Motor neuron (in vitro differentiated cells): ENCODE measurements at regions of chr13 and their contacts with region 1.

Region 1: DNA sequence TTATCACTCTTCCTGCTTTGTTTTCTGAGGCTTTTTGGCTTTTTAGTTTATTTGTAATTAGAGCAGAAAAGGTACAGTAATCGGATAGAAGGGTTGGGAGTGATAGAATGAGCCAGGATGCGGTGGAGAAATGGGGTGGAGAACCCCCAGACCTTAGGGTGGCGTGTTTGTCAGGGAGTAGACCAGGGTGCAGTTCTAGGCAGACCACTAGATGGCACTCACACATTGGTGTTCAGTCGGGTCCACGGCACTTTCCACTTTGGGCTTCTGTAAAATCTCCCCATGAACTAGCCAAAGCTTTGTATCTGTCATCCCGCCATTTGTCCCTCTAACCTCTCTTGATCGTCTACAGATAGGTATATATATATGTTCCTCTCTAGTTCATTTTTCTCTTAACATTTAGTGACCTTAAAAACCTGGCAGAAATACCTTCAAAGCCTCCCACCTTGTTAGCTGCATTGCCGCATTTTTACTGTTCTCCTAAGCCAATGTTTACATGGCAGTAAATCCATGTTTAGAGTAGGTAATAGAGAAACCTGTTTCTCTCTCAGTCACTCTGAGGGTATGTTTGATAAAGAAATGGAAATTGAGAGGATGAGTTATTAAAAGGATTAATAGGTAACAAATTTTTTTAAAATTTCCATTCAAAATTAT is 154.9 kb downstream of the TM9SF2 start:
- ATAC-seq: peak; percentile 31 to 75 (median 60)
- H3K4me3 ChIP-seq: no peak overlapping the region
- H3K27ac ChIP-seq: no peak overlapping the region
- H3K4me1 ChIP-seq: peaks cover 21 to 28% of the 10 kb centered on the region in 2 donors

Region 2: GRCh38 chr13:99425485-99426341 is 230.5 kb before region 1 on chr13:
- in situ Hi-C with region 1: no loop called
- ATAC-seq: no peak
- H3K4me3 ChIP-seq: no peak overlapping the region
- H3K27ac ChIP-seq: no peak overlapping the region
- H3K4me1 ChIP-seq: no peaks in the 10 kb centered on the region

Region 3: GRCh38 chr13:99980201-99980823 is 324.1 kb after region 1 on chr13:
- in situ Hi-C with region 1: loop called in 1 of 9 experiments (anchors 25 kb)
- ATAC-seq: peak; percentile 70 to 82 (median 72)
- H3K4me3 ChIP-seq: peak overlapping the region; percentile 38 to 84 (median 55)
- H3K27ac ChIP-seq: peak overlapping the region in 1 of 2 donors; percentile 92
- H3K4me1 ChIP-seq: peaks cover 0 to 6% of the 10 kb centered on the region in 2 donors

Region 4: DNA sequence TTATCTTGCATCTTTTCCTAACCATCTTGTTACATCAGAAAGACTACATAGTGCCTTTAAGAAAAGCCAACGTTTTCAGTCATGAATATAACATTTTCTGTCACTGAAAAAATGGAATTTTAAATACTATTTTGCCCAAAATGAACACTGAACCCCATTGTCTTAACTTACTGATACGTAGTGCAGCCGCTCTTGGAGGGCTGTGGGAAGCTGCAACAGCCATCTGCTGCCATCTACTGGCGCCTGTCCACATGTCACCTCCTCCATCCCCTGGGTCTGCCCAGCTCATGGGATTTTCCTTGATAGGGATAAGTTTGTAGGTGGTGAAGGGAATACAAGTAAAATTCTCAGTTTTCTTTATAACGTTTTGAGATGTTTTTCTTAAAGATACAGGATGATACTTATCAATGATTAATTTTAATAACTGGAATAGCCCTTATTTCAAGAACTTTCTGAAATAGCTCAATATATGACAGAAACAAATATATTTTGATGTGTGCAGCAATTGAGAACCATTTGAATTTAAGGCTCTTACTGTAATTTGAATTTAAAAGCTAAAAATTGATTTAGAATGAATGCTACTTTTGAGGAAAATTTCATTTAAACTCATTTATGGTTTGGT is 858.7 kb after region 1 on chr13:
- in situ Hi-C with region 1: loop called in 6 of 9 experiments (anchors 10 to 25 kb)
- ATAC-seq: peak; percentile 55 to 99 (median 70)
- H3K4me3 ChIP-seq: no peak overlapping the region
- H3K27ac ChIP-seq: no peak overlapping the region
- H3K4me1 ChIP-seq: peaks cover 29 to 32% of the 10 kb centered on the region in 2 donors

Region 5: GRCh38 chr13:100542826-100543156 is 886.6 kb after region 1 on chr13:
- in situ Hi-C with region 1: loop called in 2 of 9 experiments (anchors 25 kb)
- ATAC-seq: peak in 3 of 8 experiments; percentile 77 to 96 (median 83)
- H3K4me3 ChIP-seq: no peak overlapping the region
- H3K27ac ChIP-seq: no peak overlapping the region
- H3K4me1 ChIP-seq: no peaks in the 10 kb centered on the region